ENCODE measurements at regions of chr6 and their contacts with region 1.

Region 1: DNA sequence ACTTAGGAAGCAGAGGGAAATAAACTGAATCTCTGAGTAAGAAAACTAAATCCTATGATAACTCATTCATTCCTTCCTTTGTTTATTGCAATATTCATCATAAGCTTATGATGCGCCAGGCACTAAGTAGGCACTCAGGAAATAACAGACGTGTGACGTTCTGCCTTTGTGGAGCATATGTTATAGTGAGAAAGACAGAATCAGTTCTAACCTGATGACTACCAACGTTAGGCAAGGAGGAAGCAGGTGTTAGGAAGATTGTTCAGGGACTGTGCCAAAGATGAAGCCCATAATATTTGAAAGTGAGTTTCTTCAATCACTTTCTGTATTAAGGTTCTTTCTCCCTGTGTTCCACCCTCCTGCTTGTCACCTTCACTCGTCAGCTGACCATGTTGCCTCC is 3.6 kb downstream of the HLA-DQA2 start:
- DNase-seq: no peak
- H3K4me3 ChIP-seq: no peak overlapping the region
- H3K27ac ChIP-seq: no peak overlapping the region
- H3K4me1 ChIP-seq: no peaks in the 10 kb centered on the region
- H3K27me3 ChIP-seq: peaks cover 0 to 13% (median 0%) of the 10 kb centered on the region in 4 donors
- CTCF ChIP-seq: no peak
- EP300 ChIP-seq: no peak
- POLR2A ChIP-seq: no peak

Region 2: DNA sequence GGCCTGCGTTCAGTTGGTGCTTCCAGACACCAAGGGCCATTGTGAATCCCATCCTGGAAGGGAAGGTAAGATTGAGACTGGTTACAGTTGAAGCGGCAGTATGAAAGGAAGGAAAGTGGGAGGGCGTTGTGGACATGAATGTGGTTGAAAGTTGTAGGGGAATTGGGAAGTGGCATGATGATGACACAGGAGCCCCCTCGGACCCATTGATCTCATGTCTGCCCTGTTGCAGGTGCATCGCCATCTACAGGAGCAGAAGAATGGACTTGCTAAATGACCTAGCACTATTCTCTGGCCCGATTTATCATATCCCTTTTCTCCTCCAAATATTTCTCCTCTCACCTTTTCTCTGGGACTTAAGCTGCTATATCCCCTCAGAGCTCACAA is 102.1 kb before region 1 on chr6:
- intact Hi-C with region 1: loop called (anchors 5 kb)
- DNase-seq: no peak
- H3K4me3 ChIP-seq: no peak overlapping the region
- H3K27ac ChIP-seq: no peak overlapping the region
- H3K4me1 ChIP-seq: no peaks in the 10 kb centered on the region
- H3K27me3 ChIP-seq: no peaks in the 10 kb centered on the region
- CTCF ChIP-seq: no peak
- EP300 ChIP-seq: no peak
- POLR2A ChIP-seq: no peak

Measured in esophagus muscularis mucosa (tissue), 4 donors.